ENCODE measurements at regions of chr6 and their contacts with region 1.

Region 1: DNA sequence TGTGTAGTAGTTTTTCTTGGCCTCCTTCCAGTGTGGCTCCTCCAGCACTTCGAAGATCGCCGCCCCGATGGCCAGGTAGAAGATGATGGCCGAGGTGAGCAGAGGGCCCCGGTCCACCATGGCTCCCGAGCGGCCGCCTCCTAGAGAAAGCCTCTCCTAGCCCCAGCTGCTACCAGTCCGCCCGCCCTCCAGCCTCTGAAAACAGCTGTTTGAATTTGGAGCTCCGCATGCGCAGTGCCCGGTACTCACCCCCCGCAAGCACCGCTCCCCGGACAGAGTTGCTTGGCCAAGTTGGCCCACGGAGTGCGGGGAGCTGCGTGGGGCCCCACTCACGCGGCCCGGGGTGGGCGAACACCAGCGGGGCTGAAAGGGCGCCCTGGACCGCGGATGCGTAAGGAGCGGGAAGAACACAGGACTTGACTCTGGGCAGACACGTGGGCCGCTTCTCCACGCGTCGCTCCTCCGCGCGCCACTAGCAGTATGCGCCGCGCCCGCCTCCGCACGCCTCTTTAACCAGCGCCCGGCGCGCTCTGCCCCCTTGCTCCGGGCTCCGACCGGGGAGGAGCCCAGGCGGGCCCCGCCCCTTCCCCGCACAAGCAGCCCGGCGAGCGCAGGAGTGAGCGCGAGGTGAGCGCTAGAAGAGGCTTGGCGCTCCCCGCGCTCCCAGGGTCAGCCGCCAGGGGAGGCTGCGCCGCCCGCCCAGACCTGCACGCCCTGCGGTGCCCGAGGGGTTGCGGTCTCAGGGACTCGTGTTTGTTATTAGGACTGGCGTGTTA is at the start of gene KCNK5:
- DNase-seq: peak; percentile 97
- H3K4me3 Mint-ChIP-seq: peak within 1 kb of the TSS; percentile 94
- H3K27ac Mint-ChIP-seq: peak within 1 kb of the TSS; percentile 86
- H3K4me1 Mint-ChIP-seq: peaks cover 42% of the 10 kb centered on the region
- H3K27me3 Mint-ChIP-seq: no peaks in the 10 kb centered on the region
- total RNA-seq, gene KCNK5: 33.8 and 35.3 TPM in 2 replicates

Region 2: DNA sequence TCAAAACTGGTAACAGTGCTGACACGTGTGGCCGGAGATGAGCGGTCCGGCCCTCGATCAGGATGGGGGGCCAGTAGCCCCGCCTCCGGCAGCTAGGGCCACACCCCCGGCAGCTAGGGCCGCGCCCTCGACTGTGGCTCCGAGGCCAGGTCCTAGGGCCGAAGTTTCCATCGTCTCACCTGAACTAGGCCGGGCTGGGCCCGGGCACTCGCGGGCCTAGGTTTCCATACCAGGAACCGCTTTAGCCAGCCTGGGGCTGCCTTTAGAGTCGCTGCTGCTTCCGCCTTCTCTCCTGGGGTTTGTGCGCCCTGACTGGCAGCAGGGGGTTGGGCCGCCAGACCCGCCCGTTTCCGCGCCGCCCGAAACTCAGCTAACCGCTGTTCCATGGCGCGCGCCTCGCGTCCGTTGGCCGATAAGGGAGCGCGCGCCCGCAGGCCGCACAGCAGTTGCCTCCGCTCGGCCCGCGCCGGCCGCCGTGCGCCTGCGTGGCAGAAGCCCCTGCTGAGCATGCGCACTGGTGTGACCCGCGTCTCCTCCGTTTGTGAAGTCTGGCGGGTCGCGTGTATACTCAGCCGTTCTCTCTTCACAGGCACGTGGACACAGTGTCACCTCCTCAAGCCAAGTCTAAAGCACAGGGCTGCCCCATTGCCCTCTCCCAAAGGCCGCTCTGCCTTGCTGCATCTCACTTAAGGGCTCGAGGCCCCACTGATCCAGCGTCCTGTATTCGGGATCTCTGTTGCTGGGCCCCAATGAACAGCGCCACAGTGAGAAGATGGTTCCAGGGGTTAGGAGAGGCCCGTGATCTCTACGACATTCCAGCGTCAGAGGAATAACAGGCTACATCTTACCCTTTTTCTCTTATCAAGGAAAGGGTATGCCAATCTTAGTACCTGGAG is 114.2 kb before region 1 on chr6 and contains the start of gene SAYSD1:
- intact Hi-C with region 1: loop called (anchors 2 kb)
- DNase-seq: peak; percentile 98
- H3K4me3 Mint-ChIP-seq: peak within 1 kb of the TSS; percentile 87
- H3K27ac Mint-ChIP-seq: peak within 1 kb of the TSS; percentile 97
- H3K4me1 Mint-ChIP-seq: peaks cover 51% of the 10 kb centered on the region
- H3K27me3 Mint-ChIP-seq: no peaks in the 10 kb centered on the region
- total RNA-seq, gene SAYSD1: 13.7 and 14.8 TPM in 2 replicates

Region 3: DNA sequence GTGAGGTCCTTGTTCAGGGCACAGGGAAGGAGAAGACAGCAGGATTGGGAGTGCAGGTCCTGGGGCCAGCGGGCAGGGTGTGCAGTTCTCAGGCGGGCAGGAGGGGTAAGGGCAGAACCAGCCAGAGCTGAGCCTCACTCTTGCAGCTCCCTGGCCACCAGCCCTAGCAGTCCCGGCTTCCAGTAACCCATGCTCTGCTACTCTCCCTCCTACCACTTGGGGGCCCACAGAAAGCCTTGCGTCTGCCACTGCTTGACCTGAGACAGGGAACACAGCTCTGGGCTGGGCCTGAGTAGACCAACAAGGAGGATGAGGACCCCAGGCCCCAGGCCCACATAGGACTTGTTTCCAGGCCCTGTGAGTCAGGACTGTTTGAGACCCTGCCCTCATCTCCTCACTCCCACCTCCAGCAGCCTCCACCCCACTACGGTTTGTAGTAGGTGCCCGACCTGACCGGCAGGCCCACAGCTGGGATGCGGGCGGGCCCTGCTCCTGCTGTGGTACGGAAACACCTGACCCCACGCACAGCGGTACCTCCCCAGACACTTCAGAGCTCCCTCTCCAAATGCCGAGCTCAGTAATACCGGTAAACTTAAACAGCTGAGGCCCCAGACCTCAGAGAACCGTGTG is 39.1 kb before region 1 on chr6:
- intact Hi-C with region 1: loop called (anchors 2 kb)
- DNase-seq: peak; percentile 69
- H3K4me3 Mint-ChIP-seq: no peak overlapping the region
- H3K27ac Mint-ChIP-seq: peak overlapping the region; percentile 57
- H3K4me1 Mint-ChIP-seq: peaks cover 25% of the 10 kb centered on the region
- H3K27me3 Mint-ChIP-seq: no peaks in the 10 kb centered on the region

Region 4: GRCh38 chr6:39263303-39264037 is 34.3 kb after region 1 on chr6:
- intact Hi-C with region 1: loop called (anchors 2 kb)
- DNase-seq: no peak
- H3K4me3 Mint-ChIP-seq: no peak overlapping the region
- H3K27ac Mint-ChIP-seq: peak overlapping the region; percentile 56
- H3K4me1 Mint-ChIP-seq: peaks cover 20% of the 10 kb centered on the region
- H3K27me3 Mint-ChIP-seq: peaks cover 17% of the 10 kb centered on the region

Region 5: GRCh38 chr6:41072676-41073623 is 1843.8 kb after region 1 on chr6 and contains the start of gene NFYA:
- intact Hi-C with region 1: loop called (anchors 10 kb)
- DNase-seq: peak; percentile 100
- H3K4me3 Mint-ChIP-seq: peak within 1 kb of the TSS; percentile 97
- H3K27ac Mint-ChIP-seq: peak within 1 kb of the TSS; percentile 100
- H3K4me1 Mint-ChIP-seq: peaks cover 59% of the 10 kb centered on the region
- H3K27me3 Mint-ChIP-seq: peaks cover 4% of the 10 kb centered on the region
- total RNA-seq, gene NFYA: 31.2 TPM in 2 replicates

Measured in activated CD4-positive, alpha-beta T cell treated with anti-CD3 and anti-CD28 coated beads, Interleukin-2, amount 10 ng/mL, durations not matched to agents 24 days and 14 days (primary cell).